Naive thymus-derived CD4-positive, alpha-beta T cell (primary cell): ENCODE measurements at regions of chr1 and their contacts with region 1.

Region 1: DNA sequence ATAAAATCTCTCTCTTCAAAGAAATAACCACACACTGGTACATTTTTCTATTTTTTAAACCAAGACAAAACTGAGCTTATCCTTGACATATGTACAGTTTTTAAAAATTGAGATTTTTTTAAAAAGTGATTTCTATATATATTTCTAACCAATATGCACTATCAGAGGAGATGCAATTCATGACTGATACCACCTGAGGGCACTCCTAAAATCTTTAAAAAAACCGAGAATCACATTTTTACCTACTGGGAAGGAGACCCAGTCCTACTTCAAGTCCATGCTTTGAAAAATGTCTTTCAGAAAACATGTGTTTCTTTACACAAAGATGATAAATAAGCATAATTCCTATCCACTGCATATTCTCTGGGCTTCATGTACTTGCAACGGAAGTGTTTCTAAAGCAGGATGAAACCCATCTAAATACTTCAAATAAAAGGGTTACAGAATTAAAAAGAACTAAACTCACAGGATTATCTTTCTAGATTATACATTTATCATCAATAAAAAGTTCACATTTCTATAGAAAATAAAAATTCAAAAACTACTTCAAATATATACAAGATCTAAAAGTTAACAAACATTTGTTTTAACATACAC is 98.6 kb downstream of the ENAH start:
- DNase-seq: peak in 5 of 9 donors; percentile 25 to 34 (median 30)
- ATAC-seq: peak; percentile 54
- H3K4me3 ChIP-seq: no peak overlapping the region
- H3K4me3 Mint-ChIP-seq: no peak overlapping the region
- H3K27ac ChIP-seq: no peak overlapping the region
- H3K27ac Mint-ChIP-seq: no peak overlapping the region
- H3K4me1 ChIP-seq: no peaks in the 10 kb centered on the region
- H3K4me1 Mint-ChIP-seq: no peaks in the 10 kb centered on the region
- H3K27me3 ChIP-seq: no peaks in the 10 kb centered on the region
- H3K27me3 Mint-ChIP-seq: peaks cover 0 to 16% (median 5%) of the 10 kb centered on the region in 5 donors

Region 2: DNA sequence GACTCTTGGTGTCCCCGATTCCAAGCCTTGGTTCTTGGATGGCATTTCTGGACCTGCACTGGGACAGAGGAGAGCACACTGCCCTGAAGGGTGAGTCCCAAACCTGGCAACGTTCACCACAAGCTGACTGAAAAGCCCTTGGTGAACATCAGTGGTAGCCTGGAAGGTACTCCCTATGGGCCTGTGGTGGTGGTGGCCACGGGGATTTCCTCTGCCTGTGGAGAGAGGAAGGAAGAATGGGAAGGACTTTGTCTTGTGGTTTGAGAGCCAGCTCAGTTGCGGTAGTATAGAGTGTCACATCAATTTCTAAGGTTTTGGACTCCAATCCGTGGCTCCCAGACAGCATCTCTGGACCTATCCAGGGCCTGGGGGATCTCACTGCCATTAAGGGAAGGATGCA is 574.1 kb before region 1 on chr1:
- CTCF ChIA-PET with region 1: no interaction called
- POLR2A ChIA-PET with region 1: no interaction called
- intact Hi-C with region 1: no loop called
- DNase-seq: no peak
- ATAC-seq: no peak
- H3K4me3 ChIP-seq: no peak overlapping the region
- H3K4me3 Mint-ChIP-seq: no peak overlapping the region
- H3K27ac ChIP-seq: no peak overlapping the region
- H3K27ac Mint-ChIP-seq: no peak overlapping the region
- H3K4me1 ChIP-seq: no peaks in the 10 kb centered on the region
- H3K4me1 Mint-ChIP-seq: peaks cover 0 to 9% (median 0%) of the 10 kb centered on the region in 7 donors
- H3K27me3 ChIP-seq: no peaks in the 10 kb centered on the region
- H3K27me3 Mint-ChIP-seq: peaks cover 0 to 13% (median 5%) of the 10 kb centered on the region in 5 donors

Region 3: DNA sequence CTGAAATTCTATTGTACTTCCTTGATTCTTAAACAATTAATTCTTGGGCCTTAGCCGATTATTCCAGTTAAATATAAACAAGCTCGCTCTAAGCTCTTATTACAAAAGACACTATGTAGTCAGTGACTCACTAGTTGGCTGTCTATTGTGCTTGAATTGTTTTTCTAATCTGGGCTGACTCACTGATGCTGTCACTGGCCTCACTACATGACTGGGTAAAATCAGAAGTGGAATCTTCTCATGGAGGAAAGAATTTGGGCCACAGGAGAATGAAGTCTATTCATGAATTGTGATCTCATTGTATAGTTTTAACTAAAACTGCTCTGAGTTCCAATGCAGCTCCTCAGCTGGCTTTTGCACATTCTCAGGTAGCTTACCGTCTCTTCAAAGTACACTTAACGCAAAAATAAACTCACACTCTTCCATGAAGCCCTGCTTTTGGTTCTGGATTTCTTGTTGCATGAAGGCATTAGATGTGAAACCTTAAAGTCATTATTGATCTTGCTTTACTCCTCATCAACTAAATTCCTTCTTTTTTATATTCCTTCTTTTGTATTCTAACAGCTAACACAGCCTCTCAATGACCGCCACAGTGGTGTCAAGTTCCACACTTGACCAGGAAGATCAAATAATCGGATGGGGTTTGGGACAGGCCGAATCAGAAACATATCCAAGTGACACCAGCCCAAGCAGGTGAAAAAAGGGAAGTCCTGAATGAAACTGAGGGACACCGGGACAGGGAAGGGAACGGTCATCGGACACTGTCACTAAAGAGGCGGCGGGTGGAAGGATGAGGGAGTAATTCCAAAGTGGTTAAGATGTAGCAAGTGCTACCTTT is 45.6 kb before region 1 on chr1:
- CTCF ChIA-PET with region 1: no interaction called
- POLR2A ChIA-PET with region 1: no interaction called
- intact Hi-C with region 1: no loop called
- DNase-seq: no peak
- ATAC-seq: no peak
- H3K4me3 ChIP-seq: no peak overlapping the region
- H3K4me3 Mint-ChIP-seq: no peak overlapping the region
- H3K27ac ChIP-seq: no peak overlapping the region
- H3K27ac Mint-ChIP-seq: no peak overlapping the region
- H3K4me1 ChIP-seq: no peaks in the 10 kb centered on the region
- H3K4me1 Mint-ChIP-seq: no peaks in the 10 kb centered on the region
- H3K27me3 ChIP-seq: no peaks in the 10 kb centered on the region
- H3K27me3 Mint-ChIP-seq: peaks cover 4 to 28% (median 5%) of the 10 kb centered on the region in 5 donors

Region 4: DNA sequence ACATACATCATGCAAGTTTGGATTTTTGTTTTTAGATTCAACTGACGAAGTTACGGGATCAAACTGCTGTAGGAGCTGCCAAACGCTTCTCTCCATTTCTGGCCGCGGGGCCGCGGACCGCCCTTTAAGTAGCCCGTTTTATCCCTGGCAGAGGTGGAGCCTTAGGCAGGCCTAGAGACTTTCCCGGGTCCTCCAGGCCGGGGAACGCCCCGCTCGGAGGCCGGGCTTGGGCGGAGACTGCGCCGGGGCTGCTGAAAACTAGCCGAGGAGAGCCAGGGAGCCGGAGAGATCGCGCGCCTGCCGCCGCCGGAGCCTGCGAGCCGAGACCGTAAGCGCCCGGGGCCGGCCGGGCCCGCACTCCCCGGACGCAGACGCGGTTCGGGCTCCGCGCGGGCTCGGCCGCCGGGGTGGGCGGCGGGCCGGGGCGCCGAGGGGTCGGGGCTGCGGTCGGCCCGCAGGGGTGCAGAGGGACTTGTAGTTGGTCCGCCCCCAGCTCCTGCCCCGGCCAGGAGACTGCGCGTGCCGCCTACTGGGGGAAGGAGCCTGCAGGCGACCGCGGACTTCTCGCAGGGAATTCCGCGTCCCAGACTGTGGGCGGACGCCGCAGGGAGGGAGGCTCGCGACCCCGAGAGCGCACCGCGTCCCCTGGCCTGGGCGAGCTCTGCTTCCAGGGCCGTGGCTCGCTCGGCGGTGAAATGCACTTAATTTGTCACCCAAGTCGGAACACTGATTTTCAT is 255.7 kb after region 1 on chr1 and contains the start of gene EPHX1:
- CTCF ChIA-PET with region 1: no interaction called
- POLR2A ChIA-PET with region 1: no interaction called
- intact Hi-C with region 1: loop called in 1 of 2 experiments (anchors 10 kb)
- DNase-seq: peak; percentile 35 to 78 (median 54)
- ATAC-seq: peak; percentile 89
- H3K4me3 ChIP-seq: peak within 1 kb of the TSS; percentile 41
- H3K4me3 Mint-ChIP-seq: peak within 1 kb of the TSS; percentile 77 to 89 (median 85)
- H3K27ac ChIP-seq: peak within 1 kb of the TSS; percentile 29
- H3K27ac Mint-ChIP-seq: peak within 1 kb of the TSS in 7 of 9 donors; percentile 8 to 61 (median 34)
- H3K4me1 ChIP-seq: no peaks in the 10 kb centered on the region
- H3K4me1 Mint-ChIP-seq: peaks cover 0 to 19% (median 8%) of the 10 kb centered on the region in 7 donors
- H3K27me3 ChIP-seq: no peaks in the 10 kb centered on the region
- H3K27me3 Mint-ChIP-seq: peaks cover 0 to 23% (median 0%) of the 10 kb centered on the region in 5 donors
- total RNA-seq, gene EPHX1: 1.5 to 3.2 (median 2.0) TPM

Region 5: DNA sequence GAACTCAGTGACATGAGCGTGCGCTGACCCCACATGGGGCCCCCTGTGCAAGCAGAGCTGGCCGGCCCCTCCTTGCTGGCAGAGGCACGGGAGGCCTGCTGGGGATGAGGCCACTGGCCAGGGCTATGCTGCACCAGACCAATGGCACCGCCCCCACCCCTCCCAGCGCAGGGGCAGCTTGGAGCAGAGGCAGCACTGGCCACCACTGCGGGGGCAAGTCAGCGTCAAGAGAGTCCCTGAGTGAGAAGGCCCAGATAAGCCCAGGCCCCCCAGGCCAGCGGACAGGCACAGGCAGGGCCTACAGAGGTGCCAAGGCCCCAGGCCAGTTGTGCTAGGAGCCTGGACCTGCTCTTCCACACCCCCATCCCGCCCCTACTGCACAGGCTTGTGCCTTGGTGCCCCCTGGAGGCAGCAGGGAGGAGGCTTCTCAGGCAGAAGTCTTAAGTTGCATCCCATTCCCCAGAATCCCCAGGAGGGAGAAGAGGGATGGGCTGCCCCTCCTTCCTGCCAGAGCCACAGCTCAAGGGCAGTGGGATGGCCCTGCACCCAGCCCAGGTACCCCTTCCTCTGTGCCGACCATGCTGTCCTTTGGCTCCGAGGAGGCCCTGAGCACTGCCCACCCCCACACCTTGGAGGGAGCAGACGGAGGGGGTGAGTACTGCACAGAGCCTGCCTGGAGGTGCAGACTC is 291.4 kb after region 1 on chr1:
- CTCF ChIA-PET with region 1: no interaction called
- POLR2A ChIA-PET with region 1: no interaction called
- intact Hi-C with region 1: loop called in 1 of 2 experiments (anchors 1 kb)
- DNase-seq: peak in 4 of 9 donors; percentile 35 to 55 (median 46)
- ATAC-seq: peak; percentile 36
- H3K4me3 ChIP-seq: no peak overlapping the region
- H3K4me3 Mint-ChIP-seq: no peak overlapping the region
- H3K27ac ChIP-seq: no peak overlapping the region
- H3K27ac Mint-ChIP-seq: peak overlapping the region in 6 of 9 donors; percentile 12 to 98 (median 36)
- H3K4me1 ChIP-seq: peaks cover 37 to 38% of the 10 kb centered on the region in 2 donors
- H3K4me1 Mint-ChIP-seq: peaks cover 19 to 50% (median 43%) of the 10 kb centered on the region in 7 donors
- H3K27me3 ChIP-seq: no peaks in the 10 kb centered on the region
- H3K27me3 Mint-ChIP-seq: no peaks in the 10 kb centered on the region

Region 6: DNA sequence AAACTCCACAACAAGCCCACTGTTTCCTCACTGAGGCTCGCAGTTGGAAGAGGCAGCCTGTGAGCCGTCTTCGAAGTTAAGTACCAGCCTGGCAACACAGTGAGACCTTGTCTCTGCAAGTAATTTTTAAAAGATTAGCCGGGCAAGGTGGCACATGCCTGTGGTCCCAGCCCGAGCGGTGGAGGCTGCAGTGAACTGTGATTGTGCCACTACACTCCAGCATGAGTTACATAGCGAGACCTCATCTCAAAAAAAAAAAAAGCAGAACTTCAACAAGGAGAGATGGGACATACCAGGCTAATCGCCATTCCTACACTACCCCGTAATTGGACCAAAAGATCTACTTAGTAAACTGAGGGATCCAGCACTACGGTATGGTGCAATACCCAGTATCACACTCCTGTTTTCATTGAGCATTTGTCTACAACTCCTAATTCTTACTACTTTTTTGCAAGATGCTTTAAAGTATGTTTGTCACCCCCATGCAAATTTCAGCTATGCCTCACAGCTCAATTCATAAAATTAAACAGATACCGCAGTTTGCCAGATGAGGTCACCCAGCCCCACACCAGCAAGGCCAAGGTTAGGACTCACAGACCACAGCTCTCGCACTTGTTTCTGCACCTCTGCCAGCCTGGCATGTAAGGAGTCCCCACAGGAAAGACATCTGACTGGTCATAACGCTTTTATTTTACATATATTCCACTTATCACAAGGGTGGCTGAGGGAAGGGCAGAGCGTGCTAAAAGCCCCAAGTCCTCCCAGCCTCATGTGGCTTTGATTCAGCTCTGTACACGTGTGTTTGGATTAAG is 423.8 kb after region 1 on chr1:
- CTCF ChIA-PET with region 1: interaction called, 4 read pairs
- POLR2A ChIA-PET with region 1: no interaction called
- intact Hi-C with region 1: loop called (anchors 1 kb)
- DNase-seq: no peak
- ATAC-seq: peak; percentile 30
- H3K4me3 ChIP-seq: no peak overlapping the region
- H3K4me3 Mint-ChIP-seq: no peak overlapping the region
- H3K27ac ChIP-seq: no peak overlapping the region
- H3K27ac Mint-ChIP-seq: peak overlapping the region in 1 of 9 donors; percentile 20
- H3K4me1 ChIP-seq: no peaks in the 10 kb centered on the region
- H3K4me1 Mint-ChIP-seq: peaks cover 0 to 9% (median 6%) of the 10 kb centered on the region in 7 donors
- H3K27me3 ChIP-seq: no peaks in the 10 kb centered on the region
- H3K27me3 Mint-ChIP-seq: no peaks in the 10 kb centered on the region

Region 7: GRCh38 chr1:226349801-226350518 is 795.6 kb after region 1 on chr1:
- CTCF ChIA-PET with region 1: interaction called, 10 read pairs
- POLR2A ChIA-PET with region 1: no interaction called
- intact Hi-C with region 1: no loop called
- DNase-seq: no peak
- ATAC-seq: no peak
- H3K4me3 ChIP-seq: no peak overlapping the region
- H3K4me3 Mint-ChIP-seq: no peak overlapping the region
- H3K27ac ChIP-seq: no peak overlapping the region
- H3K27ac Mint-ChIP-seq: no peak overlapping the region
- H3K4me1 ChIP-seq: no peaks in the 10 kb centered on the region
- H3K4me1 Mint-ChIP-seq: peaks cover 0 to 4% (median 0%) of the 10 kb centered on the region in 7 donors
- H3K27me3 ChIP-seq: no peaks in the 10 kb centered on the region
- H3K27me3 Mint-ChIP-seq: no peaks in the 10 kb centered on the region